ENCODE measurements at regions of chr16 and their contacts with region 1.

Region 1: DNA sequence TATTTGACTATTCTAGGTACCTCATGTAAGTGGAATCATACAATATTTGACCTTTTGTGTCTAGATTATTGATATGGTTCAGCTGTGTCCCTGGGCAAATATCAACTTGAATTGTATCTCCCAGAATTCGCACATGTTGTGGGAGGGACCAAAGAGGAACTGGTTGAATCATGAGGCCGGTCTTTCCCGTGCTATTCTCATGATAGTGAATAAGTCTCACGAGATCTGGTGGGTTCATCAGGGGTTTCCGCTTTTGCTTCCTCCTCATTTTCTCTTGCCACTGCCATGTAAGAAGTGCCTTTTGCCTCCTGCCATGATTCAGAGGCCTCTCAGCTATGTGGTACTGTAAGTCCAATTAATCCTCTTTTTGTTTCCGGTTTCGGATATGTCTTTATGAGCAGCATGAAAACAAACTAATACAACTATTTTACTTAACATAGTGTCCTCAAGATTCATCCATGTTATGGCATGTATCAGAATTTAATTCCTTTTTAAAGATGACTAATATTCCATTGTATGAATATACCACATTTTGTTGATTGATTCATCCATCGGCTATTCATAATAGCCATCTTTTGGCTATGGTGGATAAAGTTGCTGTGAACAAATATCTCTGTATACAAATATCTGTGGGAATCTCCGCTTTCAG is 129.1 kb downstream of the FTO start:
- DNase-seq: no peak
- H3K4me3 ChIP-seq: no peak overlapping the region
- H3K4me3 Mint-ChIP-seq: no peak overlapping the region
- H3K27ac Mint-ChIP-seq: no peak overlapping the region
- H3K4me1 ChIP-seq: no peaks in the 10 kb centered on the region
- H3K4me1 Mint-ChIP-seq: peaks cover 24% of the 10 kb centered on the region
- H3K27me3 ChIP-seq: no peaks in the 10 kb centered on the region
- H3K27me3 Mint-ChIP-seq: no peaks in the 10 kb centered on the region
- CTCF ChIP-seq: no peak

Region 2: DNA sequence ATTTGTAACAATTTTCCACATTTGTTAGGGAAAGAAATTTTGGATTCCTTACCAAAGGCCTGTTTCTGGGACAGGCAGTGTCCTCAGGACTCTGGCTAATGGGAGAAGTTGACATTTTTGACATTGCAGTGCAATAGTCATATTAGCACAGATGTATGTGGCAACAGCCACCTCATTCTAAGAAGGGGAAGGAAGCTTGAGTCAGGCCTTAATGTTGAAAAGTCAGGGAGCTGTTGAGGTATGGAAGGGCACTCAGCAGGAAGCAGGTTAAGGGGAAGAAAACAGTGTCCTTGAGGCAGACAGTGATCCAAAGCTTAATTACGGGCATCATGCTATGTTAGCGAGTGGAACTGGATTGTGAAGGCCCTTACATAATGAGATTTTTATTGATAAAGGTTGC is 350.9 kb before region 1 on chr16:
- CTCF ChIA-PET with region 1: no interaction called
- POLR2A ChIA-PET with region 1: no interaction called
- intact Hi-C with region 1: no loop called
- DNase-seq: no peak
- H3K4me3 ChIP-seq: no peak overlapping the region
- H3K4me3 Mint-ChIP-seq: no peak overlapping the region
- H3K27ac Mint-ChIP-seq: peak overlapping the region; percentile 52
- H3K4me1 ChIP-seq: no peaks in the 10 kb centered on the region
- H3K4me1 Mint-ChIP-seq: no peaks in the 10 kb centered on the region
- H3K27me3 ChIP-seq: no peaks in the 10 kb centered on the region
- H3K27me3 Mint-ChIP-seq: no peaks in the 10 kb centered on the region
- CTCF ChIP-seq: no peak

Region 3: DNA sequence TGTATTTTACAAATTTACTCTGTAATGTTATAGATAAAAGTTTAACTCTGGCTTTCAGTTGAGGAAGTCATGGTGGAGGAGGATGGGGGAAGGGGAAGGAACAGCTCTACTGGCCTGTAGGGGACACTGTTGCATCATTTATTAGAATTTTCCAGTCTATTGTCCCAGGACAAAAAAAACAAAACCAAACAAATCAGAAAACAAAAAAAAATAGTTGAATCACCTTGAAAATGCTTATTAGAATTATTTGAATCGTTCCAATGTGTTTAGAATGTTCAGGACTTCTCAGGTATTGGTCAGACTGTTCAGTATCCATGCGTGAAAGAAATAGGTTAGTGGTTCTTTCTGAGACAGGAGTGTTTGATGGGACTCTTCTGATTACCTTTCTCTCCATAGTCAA is 113.0 kb after region 1 on chr16:
- CTCF ChIA-PET with region 1: no interaction called
- POLR2A ChIA-PET with region 1: no interaction called
- intact Hi-C with region 1: no loop called
- DNase-seq: peak in 1 of 2 experiments; percentile 65
- H3K4me3 ChIP-seq: no peak overlapping the region
- H3K4me3 Mint-ChIP-seq: no peak overlapping the region
- H3K27ac Mint-ChIP-seq: no peak overlapping the region
- H3K4me1 ChIP-seq: peaks cover 14% of the 10 kb centered on the region
- H3K4me1 Mint-ChIP-seq: peaks cover 7% of the 10 kb centered on the region
- H3K27me3 ChIP-seq: no peaks in the 10 kb centered on the region
- H3K27me3 Mint-ChIP-seq: no peaks in the 10 kb centered on the region
- CTCF ChIP-seq: peak; percentile 69 to 87

Region 4: DNA sequence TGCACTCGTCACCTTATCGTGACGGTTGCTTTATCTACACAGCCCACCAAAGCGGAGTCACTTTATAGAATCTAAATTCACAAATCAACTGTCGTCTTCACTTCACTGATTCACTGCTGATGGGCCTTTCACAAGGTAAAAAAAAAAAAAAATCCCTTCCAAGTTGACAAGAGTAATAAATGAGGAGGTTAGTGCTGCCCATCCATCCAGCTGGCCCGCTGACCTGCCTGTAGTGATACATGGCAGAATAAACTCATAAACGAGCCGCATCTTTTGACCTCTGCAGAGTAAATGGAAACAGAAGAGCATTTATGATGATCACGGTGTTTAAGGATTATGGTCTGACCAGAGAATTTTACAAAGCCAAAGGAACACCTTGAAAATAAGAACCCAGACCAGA is 870.3 kb after region 1 on chr16:
- CTCF ChIA-PET with region 1: no interaction called
- POLR2A ChIA-PET with region 1: no interaction called
- intact Hi-C with region 1: loop called (anchors 5 kb)
- DNase-seq: no peak
- H3K4me3 ChIP-seq: no peak overlapping the region
- H3K4me3 Mint-ChIP-seq: no peak overlapping the region
- H3K27ac Mint-ChIP-seq: no peak overlapping the region
- H3K4me1 ChIP-seq: no peaks in the 10 kb centered on the region
- H3K4me1 Mint-ChIP-seq: no peaks in the 10 kb centered on the region
- H3K27me3 ChIP-seq: no peaks in the 10 kb centered on the region
- H3K27me3 Mint-ChIP-seq: no peaks in the 10 kb centered on the region
- CTCF ChIP-seq: no peak